Activated CD4-positive, alpha-beta T cell treated with anti-CD3 and anti-CD28 coated beads for 36 hours (primary cell): ENCODE measurements at regions of chr16 and their contacts with region 1.

Region 1: DNA sequence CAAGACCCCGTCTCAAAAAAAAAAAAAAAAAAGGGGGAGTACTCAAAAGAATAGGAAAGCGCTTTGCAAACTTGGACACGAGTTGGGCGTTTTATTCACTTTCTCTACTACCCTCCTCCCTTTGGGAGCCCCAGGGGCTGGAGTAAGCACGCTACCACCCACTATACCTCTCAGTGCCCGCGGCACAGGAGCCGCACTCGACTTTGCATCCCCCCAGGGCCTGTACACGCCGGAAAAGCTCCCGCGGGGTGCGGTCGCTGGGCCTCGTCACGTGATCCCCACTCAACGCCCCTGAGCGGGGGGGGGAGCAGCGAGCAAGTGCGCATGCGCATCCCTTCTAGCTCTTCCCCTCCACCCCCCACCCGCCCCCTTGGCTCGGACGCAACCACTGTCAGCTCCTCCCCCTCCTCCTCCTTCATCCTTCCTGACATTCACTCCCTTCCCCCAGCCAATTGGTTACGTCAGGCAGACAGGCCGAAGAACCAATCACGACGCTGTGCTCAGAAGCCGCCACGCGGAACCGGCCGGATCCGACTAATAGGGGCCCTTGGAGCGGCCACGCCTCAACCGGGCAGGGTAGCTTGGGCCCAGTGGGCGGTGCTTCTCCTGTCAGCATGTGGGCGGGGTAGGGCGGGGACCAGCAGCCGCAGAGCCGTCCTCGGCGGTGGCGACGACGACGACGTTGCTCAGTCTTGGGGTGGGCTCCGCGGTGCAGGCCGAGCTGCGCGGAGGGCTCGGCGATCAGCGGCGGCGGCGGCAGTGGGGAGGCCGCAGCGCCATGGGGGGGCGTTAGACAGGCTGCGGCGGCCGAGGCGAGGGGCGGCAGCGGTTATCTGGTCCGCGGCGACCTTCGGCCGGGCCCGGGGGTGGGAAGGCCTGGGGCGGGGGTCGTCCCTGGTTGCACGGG is at the start of gene HAPSTR1:
- DNase-seq: peak; percentile 100
- ATAC-seq: peak; percentile 94
- H3K4me3 Mint-ChIP-seq: peak within 1 kb of the TSS; percentile 89
- H3K27ac Mint-ChIP-seq: peak within 1 kb of the TSS; percentile 95
- H3K4me1 Mint-ChIP-seq: peaks cover 25% of the 10 kb centered on the region
- H3K27me3 Mint-ChIP-seq: no peaks in the 10 kb centered on the region
- total RNA-seq, gene HAPSTR1: 42.4 to 51.4 TPM

Region 2: GRCh38 chr16:8868416-8869211 is 222.6 kb before region 1 on chr16 and contains the start of gene CARHSP1:
- CTCF ChIA-PET with region 1: no interaction called
- POLR2A ChIA-PET with region 1: interaction called, 13 read pairs
- intact Hi-C with region 1: loop called in 1 of 2 experiments (anchors 1 kb)
- DNase-seq: peak; percentile 92
- ATAC-seq: peak; percentile 72
- H3K4me3 Mint-ChIP-seq: peak within 1 kb of the TSS; percentile 87
- H3K27ac Mint-ChIP-seq: peak within 1 kb of the TSS; percentile 92
- H3K4me1 Mint-ChIP-seq: peaks cover 40% of the 10 kb centered on the region
- H3K27me3 Mint-ChIP-seq: no peaks in the 10 kb centered on the region
- total RNA-seq, gene CARHSP1: 49.4 to 64.5 TPM

Region 3: DNA sequence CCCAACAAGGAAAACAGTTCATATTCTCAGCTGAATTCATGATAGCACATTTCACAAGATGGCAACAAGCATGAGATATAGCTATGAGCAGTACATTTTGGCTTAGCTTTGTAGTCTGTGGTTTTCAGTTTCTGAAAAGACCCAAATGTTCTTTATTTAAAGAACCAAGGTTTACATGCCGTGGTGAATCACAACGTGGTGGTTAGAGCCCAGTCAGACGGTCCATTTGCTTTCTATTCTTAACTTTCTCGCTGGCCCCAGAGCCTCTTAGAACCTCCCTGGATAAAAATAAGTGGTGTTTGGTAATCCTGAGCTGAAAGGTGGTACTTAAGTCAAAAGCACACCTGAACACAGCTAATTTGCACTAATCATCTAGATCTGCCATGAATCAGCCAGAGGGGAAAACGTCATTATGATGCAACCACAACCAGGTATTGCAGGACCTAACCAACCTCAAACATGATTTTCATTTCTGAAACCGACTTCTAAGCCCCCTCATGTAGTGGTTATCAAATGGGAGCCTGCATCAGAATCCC is 18.3 kb before region 1 on chr16:
- CTCF ChIA-PET with region 1: interaction called, 7 read pairs
- POLR2A ChIA-PET with region 1: interaction called, 31 read pairs
- intact Hi-C with region 1: loop called (anchors 1 to 2 kb)
- DNase-seq: peak; percentile 72
- ATAC-seq: peak; percentile 69
- H3K4me3 Mint-ChIP-seq: peak overlapping the region; percentile 41
- H3K27ac Mint-ChIP-seq: peak overlapping the region; percentile 95
- H3K4me1 Mint-ChIP-seq: peaks cover 51% of the 10 kb centered on the region
- H3K27me3 Mint-ChIP-seq: no peaks in the 10 kb centered on the region

Region 4: GRCh38 chr16:9124908-9125584 is 33.8 kb after region 1 on chr16:
- CTCF ChIA-PET with region 1: interaction called, 6 read pairs
- POLR2A ChIA-PET with region 1: interaction called, 14 read pairs
- intact Hi-C with region 1: loop called (anchors 1 to 5 kb)
- DNase-seq: no peak
- ATAC-seq: no peak
- H3K4me3 Mint-ChIP-seq: no peak overlapping the region
- H3K27ac Mint-ChIP-seq: peak overlapping the region; percentile 55
- H3K4me1 Mint-ChIP-seq: peaks cover 66% of the 10 kb centered on the region
- H3K27me3 Mint-ChIP-seq: no peaks in the 10 kb centered on the region

Region 5: DNA sequence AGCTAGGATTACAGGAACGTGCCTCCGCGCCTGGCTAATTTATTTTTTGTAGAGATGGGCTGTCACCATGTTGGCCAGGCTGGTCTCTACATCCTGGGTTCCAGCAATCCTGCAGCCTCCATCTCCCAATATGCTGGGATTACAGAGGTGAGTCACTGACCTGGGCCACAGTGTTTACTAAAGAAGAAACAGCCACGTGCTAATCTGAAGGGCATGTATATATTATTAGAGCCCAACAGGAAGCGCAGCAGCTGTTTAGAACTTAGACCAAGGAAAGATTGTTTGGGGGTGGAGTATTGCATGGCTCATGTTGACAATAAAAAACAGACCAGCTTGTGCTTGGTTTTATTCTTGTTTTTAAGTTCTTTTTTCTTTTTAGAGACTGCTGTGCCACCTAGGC is 60.4 kb after region 1 on chr16:
- CTCF ChIA-PET with region 1: no interaction called
- POLR2A ChIA-PET with region 1: no interaction called
- intact Hi-C with region 1: no loop called
- DNase-seq: no peak
- ATAC-seq: no peak
- H3K4me3 Mint-ChIP-seq: no peak overlapping the region
- H3K27ac Mint-ChIP-seq: no peak overlapping the region
- H3K4me1 Mint-ChIP-seq: no peaks in the 10 kb centered on the region
- H3K27me3 Mint-ChIP-seq: peaks cover 20% of the 10 kb centered on the region